Activated CD4-positive, alpha-beta memory T cell treated with anti-CD3 and anti-CD28 coated beads for 36 hours (primary cell): ENCODE measurements at regions of chr6 and their contacts with region 1.

Region 1: DNA sequence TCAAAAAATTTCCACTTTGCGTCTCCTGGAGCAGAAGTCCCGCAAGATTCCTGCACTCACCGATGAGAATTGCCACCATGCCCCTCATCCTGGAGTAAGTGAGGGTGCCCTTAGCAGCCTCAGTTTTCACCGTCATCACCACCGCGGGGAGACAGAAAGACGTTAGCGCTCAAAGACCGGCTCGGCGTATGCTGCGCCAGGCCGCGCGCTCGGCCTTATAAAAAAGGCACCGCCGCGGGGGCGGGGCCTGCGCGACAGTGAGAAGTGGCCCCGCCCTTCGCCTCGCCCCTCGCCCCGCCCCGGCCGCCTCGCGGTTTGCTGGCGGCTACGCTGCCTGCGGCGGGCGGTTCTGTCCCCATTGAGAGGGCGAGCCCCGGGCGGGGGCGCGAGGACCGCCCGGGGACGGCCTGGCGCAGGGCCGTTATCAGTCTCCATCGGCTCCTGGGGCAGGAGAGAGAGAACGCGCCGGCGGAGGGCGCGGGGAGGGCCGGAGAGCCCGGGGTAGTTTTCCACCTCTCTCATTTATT is 122.3 kb upstream of the SLC2A12 start:
- DNase-seq: peak; percentile 94
- H3K4me3 Mint-ChIP-seq: peak overlapping the region; percentile 98
- H3K27ac Mint-ChIP-seq: peak overlapping the region; percentile 94
- H3K4me1 Mint-ChIP-seq: peaks cover 62% of the 10 kb centered on the region
- H3K27me3 Mint-ChIP-seq: no peaks in the 10 kb centered on the region

Region 2: DNA sequence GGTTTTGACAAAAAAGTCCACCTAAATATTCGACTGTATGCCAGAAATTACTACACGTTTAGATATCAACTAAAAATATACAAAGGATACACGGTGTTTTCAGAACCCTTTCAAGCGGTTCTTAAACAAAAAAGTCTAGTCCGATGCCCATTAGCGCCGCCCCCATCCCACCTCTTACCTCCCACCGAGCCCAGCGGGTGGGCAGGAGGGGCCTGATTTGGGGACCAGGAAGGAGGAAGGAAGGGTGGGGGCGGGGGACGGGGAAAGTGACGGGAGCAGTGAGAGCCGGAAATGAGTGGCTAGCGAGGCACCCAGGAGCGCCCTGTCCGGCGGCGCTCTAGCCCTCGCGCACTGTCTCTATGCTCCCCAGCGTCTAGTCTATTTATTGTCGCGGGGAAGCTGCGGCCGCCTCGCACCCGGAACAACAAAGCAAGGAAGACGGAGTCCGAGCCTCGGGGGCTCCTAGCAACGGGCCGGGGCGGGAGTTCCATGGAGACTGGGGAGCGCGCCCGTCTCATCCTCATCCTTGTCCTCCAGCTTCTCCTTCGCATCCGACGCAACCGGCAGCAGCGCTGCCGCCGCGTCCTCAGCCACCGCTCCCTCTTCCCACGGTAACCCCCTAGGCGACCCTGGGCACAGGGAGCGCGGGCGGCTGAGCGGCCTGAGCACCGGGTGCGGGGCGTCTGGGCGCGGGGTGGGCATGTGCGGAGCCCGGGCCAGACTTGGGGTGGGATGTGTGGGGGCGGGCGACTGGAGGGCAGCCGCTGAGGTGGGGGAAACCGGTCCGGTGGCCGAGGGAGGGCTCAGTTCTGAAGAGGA is 221.7 kb before region 1 on chr6 and contains the start of gene TBPL1:
- CTCF ChIA-PET with region 1: no interaction called
- POLR2A ChIA-PET with region 1: no interaction called
- intact Hi-C with region 1: loop called (anchors 1 kb)
- DNase-seq: peak; percentile 93
- H3K4me3 Mint-ChIP-seq: peak within 1 kb of the TSS; percentile 93
- H3K27ac Mint-ChIP-seq: peak within 1 kb of the TSS; percentile 89
- H3K4me1 Mint-ChIP-seq: peaks cover 37% of the 10 kb centered on the region
- H3K27me3 Mint-ChIP-seq: no peaks in the 10 kb centered on the region
- total RNA-seq, gene TBPL1: 31.3 to 35.7 TPM

Region 3: GRCh38 chr6:134002821-134003220 is 171.9 kb before region 1 on chr6:
- CTCF ChIA-PET with region 1: no interaction called
- POLR2A ChIA-PET with region 1: no interaction called
- intact Hi-C with region 1: no loop called
- DNase-seq: no peak
- H3K4me3 Mint-ChIP-seq: no peak overlapping the region
- H3K27ac Mint-ChIP-seq: no peak overlapping the region
- H3K4me1 Mint-ChIP-seq: no peaks in the 10 kb centered on the region
- H3K27me3 Mint-ChIP-seq: peaks cover 21% of the 10 kb centered on the region

Region 4: DNA sequence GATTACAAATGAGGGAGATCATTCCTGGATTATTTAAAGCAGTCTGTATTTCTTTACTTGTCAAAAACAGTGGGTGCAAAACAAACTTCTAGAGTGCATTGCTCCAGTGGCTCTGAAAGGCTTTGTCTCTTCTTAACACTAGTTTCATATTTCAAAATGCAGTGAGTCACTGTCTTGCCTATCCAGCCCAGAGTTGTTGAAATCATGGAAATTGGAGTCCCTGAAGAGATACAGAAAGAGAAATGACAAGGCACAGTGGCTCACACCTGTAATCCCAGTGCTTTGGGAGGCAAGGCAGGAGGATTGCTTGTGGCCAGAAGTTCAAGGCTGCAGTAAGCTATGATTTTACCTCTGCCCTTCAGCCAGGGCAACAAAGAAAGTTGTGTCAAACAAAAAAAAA is 133.6 kb before region 1 on chr6:
- CTCF ChIA-PET with region 1: no interaction called
- POLR2A ChIA-PET with region 1: no interaction called
- intact Hi-C with region 1: no loop called
- DNase-seq: no peak
- H3K4me3 Mint-ChIP-seq: no peak overlapping the region
- H3K27ac Mint-ChIP-seq: no peak overlapping the region
- H3K4me1 Mint-ChIP-seq: no peaks in the 10 kb centered on the region
- H3K27me3 Mint-ChIP-seq: peaks cover 3% of the 10 kb centered on the region

Region 5: GRCh38 chr6:134288538-134289203 is 113.9 kb after region 1 on chr6:
- CTCF ChIA-PET with region 1: no interaction called
- POLR2A ChIA-PET with region 1: interaction called, 8 read pairs
- intact Hi-C with region 1: loop called (anchors 1 kb)
- DNase-seq: peak; percentile 15
- H3K4me3 Mint-ChIP-seq: peak overlapping the region; percentile 21
- H3K27ac Mint-ChIP-seq: peak overlapping the region; percentile 85
- H3K4me1 Mint-ChIP-seq: peaks cover 22% of the 10 kb centered on the region
- H3K27me3 Mint-ChIP-seq: no peaks in the 10 kb centered on the region

Region 6: DNA sequence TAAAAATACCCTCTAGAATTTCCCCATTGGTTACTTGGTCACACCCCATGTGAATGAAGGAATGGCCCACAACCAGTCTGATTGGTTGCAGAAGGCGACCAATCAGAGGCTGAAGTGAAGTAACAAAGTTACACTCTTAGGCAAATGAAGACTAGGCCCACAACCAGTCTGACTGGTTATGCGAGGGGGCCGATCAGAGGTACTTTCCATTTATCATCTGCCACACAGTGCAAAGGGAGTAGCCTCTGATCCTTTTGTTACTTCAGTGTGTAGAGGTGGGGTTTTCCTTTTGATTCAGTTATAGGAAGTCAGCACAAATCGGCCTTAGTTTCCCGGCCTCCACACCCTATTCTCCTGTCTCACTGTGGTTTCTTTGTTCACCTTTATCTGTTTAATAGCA is 204.4 kb after region 1 on chr6:
- CTCF ChIA-PET with region 1: interaction called, 3 read pairs
- POLR2A ChIA-PET with region 1: interaction called, 3 read pairs
- intact Hi-C with region 1: loop called (anchors 1 kb)
- DNase-seq: peak; percentile 81
- H3K4me3 Mint-ChIP-seq: peak overlapping the region; percentile 27
- H3K27ac Mint-ChIP-seq: peak overlapping the region; percentile 83
- H3K4me1 Mint-ChIP-seq: peaks cover 32% of the 10 kb centered on the region
- H3K27me3 Mint-ChIP-seq: no peaks in the 10 kb centered on the region

Region 7: DNA sequence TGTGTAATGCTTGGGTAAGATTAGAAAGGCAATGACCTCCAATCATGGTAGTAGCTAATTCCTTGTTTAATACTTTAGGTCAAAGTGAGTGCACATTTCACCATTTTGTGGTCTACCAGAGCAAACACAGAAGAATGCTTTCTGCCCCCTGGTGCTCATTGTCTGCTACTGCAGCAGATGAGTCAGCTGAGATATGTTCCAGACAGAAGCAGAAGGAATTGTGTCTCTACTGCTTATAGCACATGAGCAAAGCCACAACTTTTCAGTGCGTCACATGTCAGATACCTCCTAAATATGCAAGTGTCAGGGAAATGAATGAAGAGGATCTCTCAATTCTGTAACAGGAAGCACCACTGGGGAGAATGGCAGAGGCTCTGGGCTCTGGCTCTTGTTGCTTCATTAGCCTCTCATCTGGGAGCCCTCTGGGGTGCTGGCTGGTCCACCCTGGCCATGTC is 466.3 kb after region 1 on chr6:
- CTCF ChIA-PET with region 1: interaction called, 78 read pairs
- POLR2A ChIA-PET with region 1: interaction called, 7 read pairs
- intact Hi-C with region 1: loop called (anchors 1 kb)
- DNase-seq: peak; percentile 85
- H3K4me3 Mint-ChIP-seq: no peak overlapping the region
- H3K27ac Mint-ChIP-seq: no peak overlapping the region
- H3K4me1 Mint-ChIP-seq: peaks cover 32% of the 10 kb centered on the region
- H3K27me3 Mint-ChIP-seq: no peaks in the 10 kb centered on the region

Region 8: DNA sequence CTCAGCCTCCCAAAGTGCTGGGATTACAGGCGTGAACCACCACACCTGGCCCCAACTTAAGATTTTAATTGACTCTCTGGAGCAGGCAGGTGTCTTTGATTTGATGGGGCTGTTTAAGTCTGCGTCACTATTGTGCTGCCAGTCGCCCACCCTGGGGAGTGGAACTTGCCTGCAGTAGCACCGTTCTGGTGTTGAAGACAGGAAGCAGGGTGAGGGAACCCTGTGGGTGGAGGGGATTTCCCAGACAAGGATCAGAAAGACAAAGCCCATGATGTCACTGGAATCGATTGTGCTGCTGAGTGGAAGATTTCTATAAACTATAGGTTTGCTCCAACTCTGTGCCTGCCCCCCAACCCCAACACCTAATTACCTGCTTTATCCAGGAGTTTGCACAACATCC is 764.2 kb after region 1 on chr6:
- CTCF ChIA-PET with region 1: interaction called, 18 read pairs
- POLR2A ChIA-PET with region 1: interaction called, 3 read pairs
- intact Hi-C with region 1: loop called (anchors 1 kb)
- DNase-seq: peak; percentile 87
- H3K4me3 Mint-ChIP-seq: no peak overlapping the region
- H3K27ac Mint-ChIP-seq: no peak overlapping the region
- H3K4me1 Mint-ChIP-seq: peaks cover 20% of the 10 kb centered on the region
- H3K27me3 Mint-ChIP-seq: no peaks in the 10 kb centered on the region